Breast epithelium (tissue), 4 donors: ENCODE measurements at regions of chr19 and their contacts with region 1.

Region 1: DNA sequence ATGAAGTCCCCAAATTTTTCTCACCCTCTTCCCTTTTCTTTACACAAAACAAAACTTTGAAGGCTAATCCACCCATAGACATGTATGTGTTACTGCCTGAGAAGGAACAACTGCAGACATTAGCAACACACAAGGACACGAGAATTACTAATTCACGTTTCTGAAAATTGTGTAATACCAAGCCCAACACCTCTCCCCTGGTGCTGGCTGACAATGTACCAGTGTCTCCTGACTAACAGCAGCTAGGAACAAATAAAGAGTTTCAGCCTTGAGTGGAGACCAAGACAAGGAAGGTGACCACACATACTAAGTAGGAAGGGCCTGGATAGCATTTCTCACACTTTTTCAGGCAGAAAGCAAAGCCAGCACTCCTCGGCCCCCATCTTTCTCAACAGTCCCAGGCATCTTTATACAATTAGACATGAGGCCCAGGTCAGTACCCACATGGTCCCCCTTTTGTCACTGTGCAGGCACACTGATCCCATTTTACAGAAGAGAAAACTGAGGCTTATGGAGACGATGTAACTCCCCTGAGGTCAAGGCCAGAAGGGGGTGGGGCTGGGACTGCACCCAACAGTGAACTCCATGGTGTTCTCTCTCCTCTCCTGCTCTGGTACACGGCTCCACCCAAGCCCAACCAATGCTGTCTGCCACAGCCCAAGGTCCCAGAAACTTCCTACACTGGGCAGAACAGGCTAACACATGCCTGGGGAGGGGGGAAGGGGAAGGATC is 8.7 kb downstream of the BRD4 start:
- DNase-seq: peak in 1 of 2 donors; percentile 64
- H3K4me3 ChIP-seq: peak overlapping the region in 1 of 3 donors; percentile 9
- H3K27ac ChIP-seq: peak overlapping the region; percentile 85 to 88
- H3K4me1 ChIP-seq: peaks cover 20 to 45% of the 10 kb centered on the region in 2 donors
- H3K27me3 ChIP-seq: no peaks in the 10 kb centered on the region
- CTCF ChIP-seq: no peak
- POLR2A ChIP-seq: no peak

Region 2: GRCh38 chr19:14175351-14175792 is 1148.3 kb before region 1 on chr19:
- intact Hi-C with region 1: loop called (anchors 5 kb)
- DNase-seq: no peak
- H3K4me3 ChIP-seq: no peak overlapping the region
- H3K27ac ChIP-seq: no peak overlapping the region
- H3K4me1 ChIP-seq: no peaks in the 10 kb centered on the region
- H3K27me3 ChIP-seq: no peaks in the 10 kb centered on the region
- CTCF ChIP-seq: no peak
- POLR2A ChIP-seq: no peak